ENCODE measurements at regions of chr1 and their contacts with region 1.

Region 1: GRCh38 chr1:26744075-26744959 is 43.4 kb upstream of the PIGV start:
- DNase-seq: peak; percentile 94
- ATAC-seq: peak; percentile 98
- H3K4me3 Mint-ChIP-seq: peak overlapping the region; percentile 71
- H3K27ac Mint-ChIP-seq: peak overlapping the region; percentile 97
- H3K4me1 Mint-ChIP-seq: peaks cover 83% of the 10 kb centered on the region
- H3K27me3 Mint-ChIP-seq: no peaks in the 10 kb centered on the region

Region 2: DNA sequence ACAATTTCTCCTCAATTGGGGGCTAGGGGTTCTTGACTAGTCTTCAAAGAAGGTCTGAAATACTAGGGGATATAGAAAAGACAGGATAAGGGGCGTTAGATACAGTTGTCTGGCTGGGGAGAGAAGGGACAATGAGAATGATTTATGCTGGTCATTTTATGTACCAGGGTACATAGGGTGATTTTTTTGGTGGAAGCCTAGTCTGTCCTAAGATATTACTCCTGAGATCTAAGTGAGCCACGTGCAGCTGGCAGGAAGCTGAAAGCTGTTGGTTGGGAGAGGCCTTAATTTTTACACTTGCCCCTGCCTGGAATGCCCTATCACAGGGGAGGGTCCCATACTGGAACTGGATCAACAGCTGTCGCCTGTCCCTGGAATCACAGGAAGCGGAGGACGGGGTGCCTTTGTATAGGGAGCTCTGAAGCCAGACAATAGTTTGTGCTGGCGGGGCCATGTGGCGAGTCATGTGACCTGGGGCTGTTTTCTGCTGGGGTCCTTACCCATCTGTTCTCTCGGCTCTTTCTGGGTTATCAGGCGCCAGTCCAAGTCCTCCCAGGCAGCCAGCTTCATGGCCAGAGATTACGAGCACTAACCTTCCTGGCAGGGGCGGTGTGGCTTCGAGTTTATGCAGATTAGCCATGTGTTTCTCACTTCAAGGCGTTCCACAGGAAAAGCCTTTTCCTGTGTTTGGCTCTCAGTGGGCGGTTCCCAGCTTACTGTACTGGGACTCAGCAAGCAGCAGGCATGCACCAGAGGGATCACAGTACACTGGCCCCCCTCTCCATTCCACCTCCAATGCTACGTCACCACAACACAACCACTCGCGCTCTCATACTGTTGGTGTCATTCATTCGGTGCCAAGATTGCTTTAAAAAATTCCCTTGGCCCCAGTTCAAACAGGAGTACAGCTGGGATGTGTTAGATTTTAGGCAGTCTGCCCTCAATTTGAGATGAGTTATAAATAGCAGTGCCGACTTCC is 21.0 kb before region 1 on chr1:
- CTCF ChIA-PET with region 1: interaction called, 18 read pairs
- POLR2A ChIA-PET with region 1: interaction called, 4 read pairs
- DNase-seq: peak; percentile 48
- ATAC-seq: peak; percentile 68
- H3K4me3 Mint-ChIP-seq: peak overlapping the region; percentile 42
- H3K27ac Mint-ChIP-seq: peak overlapping the region; percentile 56
- H3K4me1 Mint-ChIP-seq: peaks cover 86% of the 10 kb centered on the region
- H3K27me3 Mint-ChIP-seq: no peaks in the 10 kb centered on the region

Region 3: DNA sequence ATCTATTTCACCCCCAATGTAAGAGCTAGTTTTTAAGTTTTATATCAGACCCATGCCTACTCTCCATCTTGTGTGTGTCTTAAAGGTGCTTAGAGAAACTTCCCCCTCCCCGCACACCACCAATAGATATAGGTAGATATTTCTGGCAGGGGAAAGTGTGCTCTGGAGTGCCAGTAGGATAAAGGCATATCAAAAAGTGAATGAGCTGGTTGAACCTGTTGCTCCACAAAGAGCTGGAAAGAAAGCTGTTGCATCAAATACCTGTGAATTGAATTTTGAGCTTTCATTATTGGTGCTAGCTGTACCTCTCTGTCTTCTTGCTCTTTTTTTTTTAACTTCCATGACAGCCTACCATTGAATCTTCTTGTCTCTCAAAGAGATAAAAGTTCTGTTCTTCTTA is 15.7 kb before region 1 on chr1:
- CTCF ChIA-PET with region 1: interaction called, 18 read pairs
- POLR2A ChIA-PET with region 1: interaction called, 4 read pairs
- DNase-seq: no peak
- ATAC-seq: no peak
- H3K4me3 Mint-ChIP-seq: no peak overlapping the region
- H3K27ac Mint-ChIP-seq: peak overlapping the region; percentile 35
- H3K4me1 Mint-ChIP-seq: peaks cover 72% of the 10 kb centered on the region
- H3K27me3 Mint-ChIP-seq: no peaks in the 10 kb centered on the region

Region 4: GRCh38 chr1:26768755-26769154 is 24.4 kb after region 1 on chr1:
- CTCF ChIA-PET with region 1: interaction called, 11 read pairs
- POLR2A ChIA-PET with region 1: interaction called, 3 read pairs
- DNase-seq: no peak
- ATAC-seq: no peak
- H3K4me3 Mint-ChIP-seq: no peak overlapping the region
- H3K27ac Mint-ChIP-seq: peak overlapping the region; percentile 29
- H3K4me1 Mint-ChIP-seq: peaks cover 18% of the 10 kb centered on the region
- H3K27me3 Mint-ChIP-seq: no peaks in the 10 kb centered on the region